Heart right ventricle (tissue), 16 donors: ENCODE measurements at regions of chrX and their contacts with region 1.

Region 1: GRCh38 chrX:38275615-38276014 is 51.7 kb downstream of the RPGR start:
- DNase-seq: no peak
- ATAC-seq: no peak
- H3K4me3 ChIP-seq: no peak overlapping the region
- H3K27ac ChIP-seq: no peak overlapping the region
- H3K4me1 ChIP-seq: peaks cover 0 to 5% (median 0%) of the 10 kb centered on the region in 9 donors
- H3K27me3 ChIP-seq: peaks cover 0 to 15% (median 0%) of the 10 kb centered on the region in 7 donors
- CTCF ChIP-seq: no peak

Region 2: GRCh38 chrX:38175140-38175539 is 100.5 kb before region 1 on chrX:
- intact Hi-C with region 1: no loop called
- DNase-seq: no peak
- ATAC-seq: peak in 1 of 8 donors; percentile 44
- H3K4me3 ChIP-seq: no peak overlapping the region
- H3K27ac ChIP-seq: no peak overlapping the region
- H3K4me1 ChIP-seq: no peaks in the 10 kb centered on the region
- H3K27me3 ChIP-seq: peaks cover 0 to 20% (median 0%) of the 10 kb centered on the region in 7 donors
- CTCF ChIP-seq: peak in 6 of 9 donors; percentile 22 to 44 (median 28)

Region 3: GRCh38 chrX:38206036-38206435 is 69.6 kb before region 1 on chrX:
- intact Hi-C with region 1: loop called in 1 of 10 experiments (anchors 10 kb)
- DNase-seq: no peak
- ATAC-seq: peak in 2 of 8 donors; percentile 33 to 58
- H3K4me3 ChIP-seq: no peak overlapping the region
- H3K27ac ChIP-seq: no peak overlapping the region
- H3K4me1 ChIP-seq: peaks cover 0 to 16% (median 3%) of the 10 kb centered on the region in 9 donors
- H3K27me3 ChIP-seq: peaks cover 0 to 7% (median 0%) of the 10 kb centered on the region in 7 donors
- CTCF ChIP-seq: no peak

Region 4: DNA sequence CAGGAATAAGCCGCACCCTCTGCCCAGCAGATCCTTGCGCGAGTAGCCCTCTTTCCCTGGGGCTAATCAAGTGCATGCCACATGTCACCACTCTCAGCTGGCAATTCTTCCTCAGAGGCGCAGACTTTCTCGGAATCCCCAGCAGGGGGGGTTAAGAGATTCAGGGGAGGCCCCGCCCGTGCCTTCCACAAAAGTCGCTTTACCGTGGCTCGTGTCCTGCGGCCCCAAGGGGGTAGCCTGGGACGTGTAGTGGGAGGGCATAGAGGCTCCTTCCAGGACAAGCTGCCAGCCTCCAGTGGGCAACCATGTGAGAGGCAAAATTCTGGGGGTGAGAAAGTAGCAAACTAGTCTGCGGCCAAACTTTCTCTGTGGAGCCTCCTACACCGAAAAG is 55.6 kb before region 1 on chrX:
- intact Hi-C with region 1: no loop called
- DNase-seq: peak; percentile 19 to 27
- ATAC-seq: peak; percentile 44 to 84 (median 60)
- H3K4me3 ChIP-seq: peak overlapping the region; percentile 38 to 65 (median 57)
- H3K27ac ChIP-seq: peak overlapping the region in 9 of 10 donors; percentile 56 to 74 (median 63)
- H3K4me1 ChIP-seq: peaks cover 0 to 5% (median 0%) of the 10 kb centered on the region in 9 donors
- H3K27me3 ChIP-seq: peaks cover 0 to 68% (median 0%) of the 10 kb centered on the region in 7 donors
- CTCF ChIP-seq: peak in 5 of 9 donors; percentile 26 to 36 (median 31)